HEK293 (cell line): ENCODE measurements at regions of chr11 and their contacts with region 1.

Region 1: DNA sequence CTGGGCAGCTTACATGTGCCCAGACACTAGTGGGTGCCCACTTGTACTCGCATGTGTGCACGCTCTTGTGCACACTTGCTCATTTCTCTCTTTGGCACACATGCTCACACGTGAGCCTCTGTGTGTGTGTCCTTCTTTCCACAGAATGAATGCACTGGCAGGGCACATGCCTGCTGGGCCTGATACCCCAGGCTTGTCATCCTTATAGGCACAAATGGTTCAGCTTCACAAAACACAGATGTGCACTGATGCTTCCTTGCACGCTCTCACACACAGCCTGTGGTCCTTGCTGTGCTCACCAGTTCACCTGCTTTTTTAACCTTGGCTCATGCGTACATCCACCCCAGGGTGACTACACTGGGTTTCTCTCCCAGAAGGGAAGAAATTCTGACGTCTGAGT is 174.8 kb downstream of the BUD13 start:
- H3K4me3 ChIP-seq: no peak overlapping the region
- H3K27ac ChIP-seq: no peak overlapping the region
- H3K4me1 ChIP-seq: no peaks in the 10 kb centered on the region
- CTCF ChIP-seq: no peak

Region 2: GRCh38 chr11:116560589-116560988 is 37.4 kb before region 1 on chr11:
- CTCF ChIA-PET with region 1: no interaction called
- POLR2A ChIA-PET with region 1: no interaction called
- H3K4me3 ChIP-seq: no peak overlapping the region
- H3K27ac ChIP-seq: no peak overlapping the region
- H3K4me1 ChIP-seq: no peaks in the 10 kb centered on the region
- CTCF ChIP-seq: no peak

Region 3: DNA sequence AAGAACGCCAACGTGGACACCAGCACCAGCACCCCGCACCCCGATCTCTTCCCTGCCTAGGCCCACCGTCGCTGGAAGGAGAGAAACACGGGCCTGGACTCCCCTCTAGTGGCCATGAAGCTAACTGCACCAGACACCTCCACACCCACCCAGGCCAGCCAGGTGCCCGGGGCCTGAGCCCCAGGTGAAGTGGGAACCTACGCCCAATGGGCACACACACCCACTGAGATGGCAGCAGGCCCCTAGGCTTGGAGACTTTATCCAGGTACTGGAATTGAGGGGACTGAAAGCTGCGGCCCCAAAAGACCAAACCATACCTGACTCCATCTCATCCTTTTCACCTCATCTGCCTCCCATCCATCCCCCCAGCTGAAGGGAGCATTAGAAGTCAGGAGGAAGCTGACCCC is 93.7 kb after region 1 on chr11:
- CTCF ChIA-PET with region 1: interaction called, 10 read pairs
- POLR2A ChIA-PET with region 1: no interaction called
- H3K4me3 ChIP-seq: no peak overlapping the region
- H3K27ac ChIP-seq: no peak overlapping the region
- H3K4me1 ChIP-seq: no peaks in the 10 kb centered on the region
- CTCF ChIP-seq: peak; percentile 55; the same call in 1 of the 2 replicates